ENCODE measurements at regions of chr3 and their contacts with region 1.

Region 1: DNA sequence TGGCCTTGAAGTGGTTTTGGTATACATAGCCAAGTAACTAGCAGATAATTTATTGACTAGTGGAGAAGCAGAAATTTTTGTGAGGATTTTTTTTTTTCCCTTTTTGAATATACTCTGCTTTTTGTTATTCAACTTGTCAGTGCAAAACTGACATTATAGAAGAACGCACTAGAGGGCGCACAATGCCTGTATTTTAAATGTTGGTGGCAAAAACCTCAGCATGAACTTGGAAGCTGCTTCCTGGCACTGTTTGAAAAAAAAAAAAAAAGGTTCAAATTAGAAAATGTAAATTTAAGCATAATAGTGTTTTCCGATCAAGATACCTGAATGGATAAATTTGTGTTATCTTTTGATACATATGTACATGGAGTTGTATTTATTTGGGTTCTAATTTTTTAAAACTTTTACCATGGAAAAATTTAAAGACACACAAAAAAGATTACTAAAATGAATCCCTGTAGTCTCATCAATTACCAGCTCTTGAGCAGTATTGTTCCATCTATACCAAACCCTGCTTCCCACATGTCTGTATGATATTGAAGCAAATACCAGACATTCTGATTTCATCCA is 56.0 kb downstream of the SLC25A26 start:
- DNase-seq: no peak
- ATAC-seq: peak; percentile 70
- H3K4me3 ChIP-seq: no peak overlapping the region
- H3K27ac ChIP-seq: no peak overlapping the region
- H3K4me1 ChIP-seq: no peaks in the 10 kb centered on the region
- H3K27me3 ChIP-seq: no peaks in the 10 kb centered on the region
- CTCF ChIP-seq: peak; percentile 41 to 69 (median 49); a peak in 5 of 6 replicates
- EP300 ChIP-seq: no peak
- POLR2A ChIP-seq: no peak
- RAD21 ChIP-seq: peak; percentile 89

Region 2: DNA sequence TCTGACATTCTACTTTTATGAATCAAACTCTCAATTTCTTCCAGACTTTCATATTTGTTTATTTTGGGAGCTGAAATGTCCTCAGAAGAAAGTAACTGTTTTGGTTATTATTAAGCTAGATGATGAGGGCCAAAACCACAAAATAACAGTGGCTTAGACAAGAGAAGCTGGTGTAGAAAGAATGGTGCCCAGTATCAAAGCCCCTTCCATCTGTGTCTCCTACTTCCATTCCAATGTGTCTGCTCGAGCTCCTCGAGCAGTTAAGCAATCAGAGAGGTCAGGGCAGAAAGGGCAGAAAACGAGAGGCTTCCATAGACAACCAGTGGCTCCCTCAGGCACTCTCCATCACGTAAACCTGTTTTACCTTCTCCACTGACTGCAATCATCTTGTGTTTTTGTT is 178.4 kb before region 1 on chr3:
- CTCF ChIA-PET with region 1: no interaction called
- POLR2A ChIA-PET with region 1: no interaction called
- RAD21 ChIA-PET with region 1: no interaction called
- SMC1A ChIA-PET with region 1: no interaction called
- in situ Hi-C with region 1: no loop called
- intact Hi-C with region 1: no loop called
- DNase-seq: no peak
- ATAC-seq: no peak
- H3K4me3 ChIP-seq: no peak overlapping the region
- H3K27ac ChIP-seq: no peak overlapping the region
- H3K4me1 ChIP-seq: no peaks in the 10 kb centered on the region
- H3K27me3 ChIP-seq: no peaks in the 10 kb centered on the region
- CTCF ChIP-seq: no peak
- EP300 ChIP-seq: no peak
- POLR2A ChIP-seq: no peak
- RAD21 ChIP-seq: no peak

Region 3: DNA sequence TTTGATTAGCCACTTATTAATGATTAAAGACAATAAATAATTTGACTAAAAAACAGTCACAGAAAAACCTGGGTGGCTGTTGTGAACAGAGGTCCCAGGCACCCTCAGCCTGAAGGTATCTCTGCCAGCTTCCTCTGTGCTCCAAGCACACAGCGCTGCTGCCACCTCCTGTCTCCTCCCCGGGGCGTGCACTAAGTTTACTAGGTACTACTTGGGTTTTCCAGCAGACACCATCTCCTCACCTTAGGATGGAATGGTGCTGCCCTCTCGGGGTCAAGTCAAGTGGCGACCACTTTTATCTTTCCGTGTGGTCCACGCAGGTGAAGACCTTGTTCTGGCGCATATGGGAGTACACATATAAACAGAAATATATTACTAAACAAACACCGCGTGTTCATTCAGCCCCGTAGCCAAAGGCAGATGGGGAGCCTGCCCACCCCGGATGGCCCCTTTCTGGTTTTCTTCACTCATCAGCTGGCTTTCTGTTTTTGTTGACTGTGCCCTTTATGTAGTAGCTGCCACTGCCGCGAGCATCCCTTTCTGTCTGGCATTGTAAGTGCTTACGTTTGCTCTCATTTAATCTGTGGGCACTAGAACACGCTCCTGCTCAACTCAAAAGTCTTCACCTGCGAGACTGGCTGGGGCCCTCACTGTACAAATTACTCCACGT is 96.0 kb after region 1 on chr3:
- CTCF ChIA-PET with region 1: interaction called, 20 read pairs
- POLR2A ChIA-PET with region 1: no interaction called
- RAD21 ChIA-PET with region 1: interaction called, 8 read pairs
- SMC1A ChIA-PET with region 1: interaction called, 14 read pairs
- in situ Hi-C with region 1: no loop called
- intact Hi-C with region 1: loop called (anchors 2 kb)
- DNase-seq: no peak
- ATAC-seq: 0 out of 3 replicates have a peak, but pooled peaks have one; percentile 34
- H3K4me3 ChIP-seq: no peak overlapping the region
- H3K27ac ChIP-seq: no peak overlapping the region
- H3K4me1 ChIP-seq: no peaks in the 10 kb centered on the region
- H3K27me3 ChIP-seq: no peaks in the 10 kb centered on the region
- CTCF ChIP-seq: peak in 2 of 3 experiments; percentile 12 to 27; a peak in 3 of 6 replicates
- EP300 ChIP-seq: no peak
- POLR2A ChIP-seq: no peak
- RAD21 ChIP-seq: peak; percentile 22; the same call in 1 of the 2 replicates

Region 4: GRCh38 chr3:66378256-66378823 is 101.5 kb after region 1 on chr3:
- CTCF ChIA-PET with region 1: interaction called, 20 read pairs
- POLR2A ChIA-PET with region 1: no interaction called
- RAD21 ChIA-PET with region 1: interaction called, 4 read pairs
- SMC1A ChIA-PET with region 1: interaction called, 14 read pairs
- in situ Hi-C with region 1: no loop called
- intact Hi-C with region 1: loop called (anchors 2 kb)
- DNase-seq: no peak
- ATAC-seq: peak; percentile 61
- H3K4me3 ChIP-seq: no peak overlapping the region
- H3K27ac ChIP-seq: no peak overlapping the region
- H3K4me1 ChIP-seq: no peaks in the 10 kb centered on the region
- H3K27me3 ChIP-seq: no peaks in the 10 kb centered on the region
- CTCF ChIP-seq: peak; percentile 40 to 67 (median 63)
- EP300 ChIP-seq: no peak
- POLR2A ChIP-seq: no peak
- RAD21 ChIP-seq: peak; percentile 40

Region 5: GRCh38 chr3:66816090-66816761 is 539.4 kb after region 1 on chr3:
- CTCF ChIA-PET with region 1: interaction called, 74 read pairs
- POLR2A ChIA-PET with region 1: no interaction called
- RAD21 ChIA-PET with region 1: interaction called, 13 read pairs
- SMC1A ChIA-PET with region 1: interaction called, 14 read pairs
- in situ Hi-C with region 1: loop called (anchors 5 kb)
- intact Hi-C with region 1: loop called (anchors 1 kb)
- DNase-seq: no peak
- ATAC-seq: peak; percentile 91
- H3K4me3 ChIP-seq: no peak overlapping the region
- H3K27ac ChIP-seq: no peak overlapping the region
- H3K4me1 ChIP-seq: no peaks in the 10 kb centered on the region
- H3K27me3 ChIP-seq: no peaks in the 10 kb centered on the region
- CTCF ChIP-seq: peak; percentile 22 to 62 (median 43); a peak in 5 of 6 replicates
- EP300 ChIP-seq: no peak
- POLR2A ChIP-seq: no peak
- RAD21 ChIP-seq: peak; percentile 79

Region 6: DNA sequence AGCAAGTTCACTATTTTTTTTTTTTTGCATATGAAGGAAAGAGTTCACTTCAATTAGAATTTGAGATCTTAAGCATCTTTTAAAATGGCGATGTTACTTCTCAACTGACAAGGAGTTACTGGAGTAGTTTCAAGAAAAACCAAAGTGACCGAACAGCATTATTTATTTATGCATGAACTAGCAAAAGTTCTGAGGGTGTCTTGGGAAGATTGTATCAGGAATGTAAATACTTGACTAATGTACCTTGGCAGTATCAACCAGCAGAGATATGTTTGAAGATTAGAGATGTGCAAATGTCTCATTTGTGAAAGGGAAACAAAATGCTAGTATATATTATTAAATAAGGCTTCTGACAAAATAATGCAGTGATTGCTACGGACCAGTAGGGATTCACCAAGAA is 925.3 kb after region 1 on chr3:
- CTCF ChIA-PET with region 1: no interaction called
- POLR2A ChIA-PET with region 1: no interaction called
- RAD21 ChIA-PET with region 1: no interaction called
- SMC1A ChIA-PET with region 1: no interaction called
- in situ Hi-C with region 1: no loop called
- intact Hi-C with region 1: no loop called
- DNase-seq: no peak
- ATAC-seq: no peak
- H3K4me3 ChIP-seq: no peak overlapping the region
- H3K27ac ChIP-seq: no peak overlapping the region
- H3K4me1 ChIP-seq: no peaks in the 10 kb centered on the region
- H3K27me3 ChIP-seq: no peaks in the 10 kb centered on the region
- CTCF ChIP-seq: no peak
- EP300 ChIP-seq: no peak
- POLR2A ChIP-seq: no peak
- RAD21 ChIP-seq: no peak

Measured in GM12878 (cell line).